Astrocyte of the cerebellum (primary cell): ENCODE measurements at regions of chr1 and their contacts with region 1.

Region 1: GRCh38 chr1:234955107-234955731 is 173.4 kb downstream of the TOMM20 start:
- DNase-seq: no peak
- H3K4me3 ChIP-seq: no peak overlapping the region
- CTCF ChIP-seq: no peak

Region 2: DNA sequence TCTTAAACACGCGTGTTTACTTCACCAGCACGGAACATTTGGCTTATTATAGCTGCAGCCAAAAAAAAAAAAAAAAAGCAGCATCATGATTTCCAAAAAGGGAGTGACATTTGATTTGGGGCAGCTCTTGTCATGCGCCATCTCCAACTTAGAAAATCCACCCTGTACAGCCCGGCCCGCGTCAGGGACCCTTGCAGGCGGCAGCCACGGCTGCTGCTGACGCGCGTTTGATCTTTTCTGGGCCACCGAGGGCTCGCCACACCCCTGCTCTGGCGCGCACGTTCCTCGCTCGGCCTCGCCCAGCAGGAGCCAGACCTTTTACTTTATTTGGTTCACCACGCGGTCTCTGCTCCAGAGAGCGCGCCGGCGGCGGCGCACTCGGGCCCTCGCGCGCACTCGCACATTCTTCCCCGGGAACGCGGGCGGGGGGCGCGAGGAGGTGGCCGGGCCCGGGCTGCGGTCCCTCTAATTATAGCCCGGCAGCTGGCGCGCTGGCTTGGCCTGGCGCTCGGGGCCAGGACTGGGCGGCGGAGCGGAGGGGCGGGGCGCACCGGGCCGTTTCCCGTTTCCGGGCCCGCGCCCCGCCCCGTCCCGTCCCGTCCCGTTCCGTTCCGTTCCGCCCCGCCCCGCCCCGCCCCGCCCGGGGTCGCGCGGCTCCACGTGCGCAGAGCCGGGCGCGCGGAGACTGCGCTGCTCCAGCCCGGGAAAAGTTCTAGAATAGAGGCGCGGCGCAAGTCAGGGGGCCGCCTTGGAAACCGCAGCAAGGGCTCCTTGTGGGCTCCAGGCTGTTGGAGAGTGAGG is 355.4 kb before region 1 on chr1:
- in situ Hi-C with region 1: loop called (anchors 5 kb)
- DNase-seq: peak; percentile 65
- H3K4me3 ChIP-seq: peak overlapping the region; percentile 33
- CTCF ChIP-seq: peak; percentile 5

Region 3: DNA sequence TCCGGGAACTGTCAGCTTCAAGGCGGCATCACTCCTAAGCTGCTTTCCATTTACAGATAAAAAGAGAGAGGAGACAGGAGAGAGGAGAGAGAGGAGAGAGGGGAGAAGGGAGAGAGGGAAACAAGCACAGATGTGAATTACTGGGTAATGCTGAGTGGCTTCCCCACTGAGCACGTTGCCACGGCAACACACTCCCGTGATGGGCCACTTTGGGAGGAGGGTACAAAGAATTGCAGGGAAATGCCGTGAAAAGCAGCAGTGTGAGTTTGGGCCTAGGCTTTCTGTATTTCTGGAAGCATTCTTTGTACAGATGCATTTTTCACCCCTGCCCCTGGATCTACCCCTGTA is 217.3 kb before region 1 on chr1:
- in situ Hi-C with region 1: loop called (anchors 5 kb)
- DNase-seq: no peak
- H3K4me3 ChIP-seq: no peak overlapping the region
- CTCF ChIP-seq: no peak

Region 4: DNA sequence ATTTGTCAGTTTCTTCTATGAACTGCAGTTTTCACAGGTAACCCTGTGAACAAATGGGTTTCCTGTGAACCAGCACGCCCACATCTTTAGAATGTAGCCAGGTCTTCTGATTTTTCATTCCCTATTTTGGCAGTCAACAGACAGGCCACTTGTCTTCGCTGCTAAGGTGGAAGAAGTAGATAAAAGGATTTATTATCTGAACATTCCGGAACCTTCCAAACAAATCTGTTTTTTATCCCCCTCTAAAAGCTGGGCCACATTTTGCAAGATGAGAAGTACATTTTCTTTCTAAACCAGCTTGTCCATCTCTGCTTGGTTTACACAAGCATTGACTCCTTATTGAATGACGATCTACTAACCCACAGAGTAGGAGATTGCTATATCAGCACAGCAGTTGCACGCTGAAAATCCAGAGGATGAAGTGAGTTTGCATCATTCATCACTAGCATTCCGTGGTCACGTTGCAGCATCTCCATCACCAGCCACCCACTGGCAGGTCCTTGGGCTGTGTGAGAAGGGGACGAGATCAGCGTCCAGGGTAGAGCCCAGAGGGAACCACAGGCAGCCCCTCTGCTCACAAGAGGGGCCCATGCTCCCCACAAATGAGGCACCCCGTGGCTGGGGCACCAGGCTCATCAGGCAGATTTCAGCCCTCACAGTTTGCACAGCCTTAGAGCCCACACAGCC is 90.0 kb after region 1 on chr1:
- in situ Hi-C with region 1: no loop called
- DNase-seq: no peak
- H3K4me3 ChIP-seq: no peak overlapping the region
- CTCF ChIP-seq: no peak